Ascending aorta (tissue), 2 donors: ENCODE measurements at regions of chr3 and their contacts with region 1.

Region 1: DNA sequence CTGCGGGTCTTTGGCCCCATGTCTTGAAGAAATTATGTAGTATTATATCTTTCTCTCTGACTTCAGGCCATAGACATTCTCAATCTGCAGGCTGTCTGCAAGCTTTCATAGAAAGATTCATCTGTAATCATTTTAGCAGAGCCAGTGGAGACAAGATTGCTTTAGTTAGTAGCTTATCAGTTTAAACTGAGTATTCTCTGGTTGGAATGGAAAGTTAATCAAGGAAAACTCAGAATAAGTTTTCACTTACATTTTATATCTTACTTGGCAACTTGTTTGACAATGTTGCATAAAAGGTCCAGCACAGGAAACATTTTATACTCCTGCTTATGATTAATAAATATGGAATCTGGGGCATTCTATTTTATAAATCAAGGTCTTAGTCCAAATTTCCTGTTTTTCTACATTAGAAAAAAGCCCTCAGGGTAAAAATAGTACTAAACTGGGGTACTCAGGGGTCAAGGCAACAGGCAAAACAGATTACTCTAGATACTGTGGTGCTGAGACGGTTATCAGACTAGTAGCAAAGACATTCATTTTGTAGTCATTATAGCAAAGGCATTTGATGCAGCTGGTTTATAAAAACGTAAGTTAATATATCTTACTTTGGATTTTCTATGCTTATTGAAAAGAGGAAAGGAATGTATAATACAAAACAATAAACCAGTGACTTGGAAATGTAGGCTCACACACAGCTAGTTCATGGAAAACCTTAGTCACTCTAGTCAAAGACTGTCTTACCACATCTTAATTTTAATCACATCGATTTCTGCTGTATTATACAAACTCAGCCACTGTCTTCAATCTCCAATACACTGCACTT is 45.2 kb upstream of the FILIP1L start:
- DNase-seq: no peak
- H3K4me3 ChIP-seq: no peak overlapping the region
- H3K27ac ChIP-seq: peak overlapping the region; percentile 91 to 92
- H3K4me1 ChIP-seq: peaks cover 6 to 58% of the 10 kb centered on the region in 2 donors
- H3K27me3 ChIP-seq: no peaks in the 10 kb centered on the region
- CTCF ChIP-seq: no peak

Region 2: GRCh38 chr3:99842826-99843589 is 316.5 kb before region 1 on chr3:
- intact Hi-C with region 1: loop called (anchors 5 kb)
- DNase-seq: no peak
- H3K4me3 ChIP-seq: no peak overlapping the region
- H3K27ac ChIP-seq: peak overlapping the region; percentile 78 to 82
- H3K4me1 ChIP-seq: peaks cover 0 to 14% of the 10 kb centered on the region in 2 donors
- H3K27me3 ChIP-seq: no peaks in the 10 kb centered on the region
- CTCF ChIP-seq: peak; percentile 66 to 67 (median 67)

Region 3: DNA sequence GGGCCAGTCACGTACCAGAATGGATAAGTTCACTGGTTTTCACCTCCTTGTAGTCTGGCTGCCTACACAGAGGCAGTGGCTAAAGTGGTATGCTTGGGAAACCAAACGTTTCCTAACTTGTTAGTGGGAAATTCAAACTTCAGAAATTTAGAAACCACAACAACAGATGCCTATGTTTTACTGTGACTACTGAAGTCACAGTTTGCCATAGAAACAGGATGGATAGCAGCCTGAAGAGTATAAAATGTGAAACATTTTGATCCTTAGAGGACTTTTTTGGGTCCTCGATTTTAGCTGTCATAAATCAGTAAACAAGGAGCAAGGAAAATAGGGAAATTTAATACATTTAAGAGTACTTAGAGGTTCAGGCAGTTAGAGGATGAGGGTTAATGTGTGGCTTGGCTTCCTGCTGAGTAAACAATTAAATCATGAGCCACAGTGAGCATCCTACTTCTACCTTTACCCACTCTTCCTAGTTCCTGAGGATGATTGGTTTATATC is 293.2 kb before region 1 on chr3:
- intact Hi-C with region 1: loop called (anchors 5 kb)
- DNase-seq: no peak
- H3K4me3 ChIP-seq: peak overlapping the region; percentile 18 to 90
- H3K27ac ChIP-seq: peak overlapping the region; percentile 97 to 98
- H3K4me1 ChIP-seq: peaks cover 16 to 63% of the 10 kb centered on the region in 2 donors
- H3K27me3 ChIP-seq: no peaks in the 10 kb centered on the region
- CTCF ChIP-seq: no peak

Region 4: GRCh38 chr3:99952306-99952705 is 207.2 kb before region 1 on chr3:
- intact Hi-C with region 1: loop called (anchors 5 kb)
- DNase-seq: no peak
- H3K4me3 ChIP-seq: no peak overlapping the region
- H3K27ac ChIP-seq: peak overlapping the region in 1 of 2 donors; percentile 7
- H3K4me1 ChIP-seq: peaks cover 3 to 20% of the 10 kb centered on the region in 2 donors
- H3K27me3 ChIP-seq: no peaks in the 10 kb centered on the region
- CTCF ChIP-seq: no peak

Region 5: GRCh38 chr3:99965077-99965476 is 194.5 kb before region 1 on chr3:
- intact Hi-C with region 1: loop called (anchors 5 kb)
- DNase-seq: no peak
- H3K4me3 ChIP-seq: no peak overlapping the region
- H3K27ac ChIP-seq: peak overlapping the region; percentile 88 to 91
- H3K4me1 ChIP-seq: peaks cover 8 to 62% of the 10 kb centered on the region in 2 donors
- H3K27me3 ChIP-seq: no peaks in the 10 kb centered on the region
- CTCF ChIP-seq: no peak

Region 6: GRCh38 chr3:100068826-100069225 is 90.7 kb before region 1 on chr3:
- intact Hi-C with region 1: loop called (anchors 2 kb)
- DNase-seq: peak; percentile 54 to 93
- H3K4me3 ChIP-seq: peak overlapping the region in 1 of 2 donors; percentile 25
- H3K27ac ChIP-seq: peak overlapping the region; percentile 87 to 92
- H3K4me1 ChIP-seq: peaks cover 3 to 22% of the 10 kb centered on the region in 2 donors
- H3K27me3 ChIP-seq: no peaks in the 10 kb centered on the region
- CTCF ChIP-seq: peak; percentile 65 to 80 (median 78)

Region 7: GRCh38 chr3:100463002-100463401 is 303.5 kb after region 1 on chr3:
- intact Hi-C with region 1: no loop called
- DNase-seq: no peak
- H3K4me3 ChIP-seq: no peak overlapping the region
- H3K27ac ChIP-seq: no peak overlapping the region
- H3K4me1 ChIP-seq: no peaks in the 10 kb centered on the region
- H3K27me3 ChIP-seq: no peaks in the 10 kb centered on the region
- CTCF ChIP-seq: peak; percentile 50 to 64 (median 55)